ENCODE measurements at regions of chr2 and their contacts with region 1.

Region 1: GRCh38 chr2:160252278-160252887 is 52.3 kb upstream of the ITGB6 start:
- DNase-seq: peak; percentile 49
- H3K4me3 Mint-ChIP-seq: no peak overlapping the region
- H3K27ac Mint-ChIP-seq: no peak overlapping the region
- H3K4me1 Mint-ChIP-seq: peaks cover 23% of the 10 kb centered on the region
- H3K27me3 Mint-ChIP-seq: no peaks in the 10 kb centered on the region
- CTCF ChIP-seq: peak; percentile 54

Region 2: DNA sequence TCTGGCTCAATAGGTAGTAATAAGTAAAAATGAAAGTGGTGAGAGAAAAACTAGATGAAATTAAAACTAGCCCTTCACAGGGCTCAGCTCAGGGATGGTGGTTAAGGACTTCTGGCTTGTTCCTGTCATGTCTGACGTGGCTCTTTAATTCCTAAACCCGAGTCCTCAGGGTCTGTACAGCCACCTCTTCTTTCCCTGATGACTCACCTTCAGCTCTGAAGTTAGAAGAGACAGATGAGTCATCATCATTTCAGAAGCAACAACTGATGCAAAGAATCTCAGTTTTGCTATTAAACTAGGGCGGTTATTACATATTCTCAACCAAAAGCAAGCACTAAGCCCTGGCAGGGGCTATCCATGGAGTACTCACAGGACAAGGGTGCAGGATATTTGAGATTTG is 28.3 kb before region 1 on chr2:
- CTCF ChIA-PET with region 1: interaction called, 25 read pairs
- POLR2A ChIA-PET with region 1: interaction called, 11 read pairs
- intact Hi-C with region 1: no loop called
- DNase-seq: peak; percentile 97
- H3K4me3 Mint-ChIP-seq: peak overlapping the region; percentile 48
- H3K27ac Mint-ChIP-seq: peak overlapping the region; percentile 99
- H3K4me1 Mint-ChIP-seq: peaks cover 92% of the 10 kb centered on the region
- H3K27me3 Mint-ChIP-seq: no peaks in the 10 kb centered on the region
- CTCF ChIP-seq: no peak

Region 3: DNA sequence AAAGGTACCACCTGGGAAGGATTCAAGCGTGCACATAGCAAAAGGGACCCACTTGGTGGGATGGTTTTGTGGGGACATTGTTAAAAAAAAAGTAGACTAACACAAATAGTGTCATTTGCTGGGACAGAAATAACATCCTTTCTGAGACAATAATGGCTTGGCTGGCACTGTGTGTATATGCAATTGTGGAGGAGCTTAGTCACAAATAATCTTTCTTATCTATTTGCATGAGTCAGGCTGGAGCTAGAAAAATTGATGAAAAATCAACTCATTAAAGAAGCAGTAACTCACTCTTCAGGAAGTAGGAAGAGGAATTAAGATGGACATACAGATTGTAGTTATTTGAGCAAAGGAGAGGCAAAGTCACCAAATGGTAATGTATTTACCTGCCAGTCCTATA is 22.8 kb before region 1 on chr2:
- CTCF ChIA-PET with region 1: interaction called, 25 read pairs
- POLR2A ChIA-PET with region 1: interaction called, 11 read pairs
- intact Hi-C with region 1: no loop called
- DNase-seq: no peak
- H3K4me3 Mint-ChIP-seq: no peak overlapping the region
- H3K27ac Mint-ChIP-seq: peak overlapping the region; percentile 99
- H3K4me1 Mint-ChIP-seq: peaks cover 67% of the 10 kb centered on the region
- H3K27me3 Mint-ChIP-seq: no peaks in the 10 kb centered on the region
- CTCF ChIP-seq: no peak

Region 4: GRCh38 chr2:160241251-160242137 is 10.9 kb before region 1 on chr2:
- CTCF ChIA-PET with region 1: interaction called, 23 read pairs
- POLR2A ChIA-PET with region 1: interaction called, 7 read pairs
- intact Hi-C with region 1: no loop called
- DNase-seq: peak; percentile 97
- H3K4me3 Mint-ChIP-seq: peak overlapping the region; percentile 18
- H3K27ac Mint-ChIP-seq: peak overlapping the region; percentile 93
- H3K4me1 Mint-ChIP-seq: peaks cover 65% of the 10 kb centered on the region
- H3K27me3 Mint-ChIP-seq: no peaks in the 10 kb centered on the region
- CTCF ChIP-seq: no peak

Region 5: DNA sequence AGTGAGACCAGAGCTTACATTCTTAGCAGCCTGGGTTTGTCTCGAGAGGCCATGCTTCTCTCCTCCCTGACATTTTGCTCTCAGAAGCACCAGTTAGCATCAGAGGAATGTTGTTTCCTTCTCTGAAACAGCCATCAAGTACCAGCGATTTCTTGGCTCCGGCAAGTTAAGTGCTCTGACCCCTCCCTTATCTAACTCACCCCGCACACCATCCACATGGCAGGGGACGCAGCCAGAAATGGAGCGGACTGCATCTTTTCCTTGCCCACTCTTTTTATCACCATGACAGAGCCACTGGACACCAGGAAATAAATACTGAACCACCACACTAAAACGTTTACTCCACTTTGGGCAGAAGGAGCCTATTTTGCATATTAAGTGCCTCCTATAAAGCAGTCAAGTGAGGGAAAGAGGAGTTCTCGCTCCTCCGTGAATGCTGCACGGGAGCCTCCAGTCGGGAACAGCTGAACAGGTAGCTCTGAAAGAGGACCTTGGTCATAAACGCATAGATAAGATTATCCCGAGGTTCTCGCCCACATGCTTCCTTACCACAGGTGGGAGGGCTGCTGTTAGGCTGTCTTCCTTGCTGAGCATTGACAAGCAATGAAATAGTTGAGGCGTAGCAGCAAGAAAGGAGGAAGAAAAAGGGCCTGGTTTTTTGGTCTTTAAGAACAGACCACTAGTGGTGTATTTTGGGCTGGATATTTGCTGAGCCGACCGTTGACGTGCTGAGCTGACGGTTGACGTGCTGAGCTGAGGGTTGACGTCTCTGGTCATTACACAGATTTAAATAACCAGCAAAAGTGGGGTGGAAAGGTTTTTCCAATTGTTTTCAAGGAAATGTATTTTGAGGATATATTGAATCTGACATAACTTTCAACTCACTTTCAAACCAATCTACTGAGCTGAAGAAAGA is 19.0 kb after region 1 on chr2:
- CTCF ChIA-PET with region 1: interaction called, 15 read pairs
- POLR2A ChIA-PET with region 1: interaction called, 5 read pairs
- intact Hi-C with region 1: no loop called
- DNase-seq: no peak
- H3K4me3 Mint-ChIP-seq: no peak overlapping the region
- H3K27ac Mint-ChIP-seq: no peak overlapping the region
- H3K4me1 Mint-ChIP-seq: no peaks in the 10 kb centered on the region
- H3K27me3 Mint-ChIP-seq: no peaks in the 10 kb centered on the region
- CTCF ChIP-seq: no peak

Region 6: GRCh38 chr2:160994141-160995002 is 742.0 kb after region 1 on chr2:
- CTCF ChIA-PET with region 1: interaction called, 22 read pairs
- POLR2A ChIA-PET with region 1: no interaction called
- intact Hi-C with region 1: loop called (anchors 1 kb)
- DNase-seq: peak; percentile 87
- H3K4me3 Mint-ChIP-seq: no peak overlapping the region
- H3K27ac Mint-ChIP-seq: no peak overlapping the region
- H3K4me1 Mint-ChIP-seq: peaks cover 9% of the 10 kb centered on the region
- H3K27me3 Mint-ChIP-seq: no peaks in the 10 kb centered on the region
- CTCF ChIP-seq: peak; percentile 76

Measured in MCF 10A (cell line).